ENCODE measurements at regions of chr15 and their contacts with region 1.

Region 1: DNA sequence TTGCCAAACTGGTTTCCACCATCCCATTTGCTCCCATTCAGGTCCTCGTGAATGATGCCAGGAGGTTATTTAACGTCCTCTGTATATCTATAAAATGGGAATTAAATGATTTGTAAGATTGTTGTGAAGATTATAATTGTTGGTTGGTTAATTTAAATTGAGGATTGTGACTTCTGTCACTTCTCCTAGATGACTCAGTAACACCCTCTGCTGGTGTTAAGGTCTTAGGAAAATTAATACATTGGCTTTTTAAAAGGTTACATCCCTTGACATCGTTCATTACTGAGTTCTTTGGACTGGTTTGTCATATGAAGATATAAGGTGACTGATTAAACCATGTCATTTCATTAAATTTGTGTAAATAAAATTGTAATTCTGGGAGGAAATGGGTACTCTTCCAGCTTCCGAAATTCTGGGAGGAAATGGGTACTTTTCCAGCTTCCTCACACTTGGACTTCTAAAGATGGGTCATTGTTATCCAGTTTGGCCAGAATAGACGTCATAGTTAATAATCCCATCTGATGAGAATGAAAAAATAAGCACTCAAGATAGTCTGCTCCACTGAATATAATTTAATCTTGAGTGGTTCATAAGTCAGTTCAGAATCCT is 33.3 kb upstream of the PAQR5 start:
- DNase-seq: peak; percentile 46
- H3K4me3 ChIP-seq: no peak overlapping the region
- H3K27ac ChIP-seq: no peak overlapping the region
- H3K4me1 ChIP-seq: no peaks in the 10 kb centered on the region
- H3K27me3 ChIP-seq: no peaks in the 10 kb centered on the region
- CTCF ChIP-seq: peak; percentile 22 to 33
- POLR2A ChIP-seq: no peak

Region 2: GRCh38 chr15:69031013-69032001 is 234.1 kb before region 1 on chr15:
- CTCF ChIA-PET with region 1: interaction called, 10 read pairs
- POLR2A ChIA-PET with region 1: no interaction called
- dilution Hi-C with region 1: no loop called
- intact Hi-C with region 1: no loop called
- DNase-seq: peak; percentile 35
- H3K4me3 ChIP-seq: peak overlapping the region in 2 of 3 experiments; percentile 9 to 24
- H3K27ac ChIP-seq: no peak overlapping the region
- H3K4me1 ChIP-seq: no peaks in the 10 kb centered on the region
- H3K27me3 ChIP-seq: peaks cover 0 to 2% of the 10 kb centered on the region in 2 experiments
- CTCF ChIP-seq: peak; percentile 56 to 70
- POLR2A ChIP-seq: no peak

Region 3: DNA sequence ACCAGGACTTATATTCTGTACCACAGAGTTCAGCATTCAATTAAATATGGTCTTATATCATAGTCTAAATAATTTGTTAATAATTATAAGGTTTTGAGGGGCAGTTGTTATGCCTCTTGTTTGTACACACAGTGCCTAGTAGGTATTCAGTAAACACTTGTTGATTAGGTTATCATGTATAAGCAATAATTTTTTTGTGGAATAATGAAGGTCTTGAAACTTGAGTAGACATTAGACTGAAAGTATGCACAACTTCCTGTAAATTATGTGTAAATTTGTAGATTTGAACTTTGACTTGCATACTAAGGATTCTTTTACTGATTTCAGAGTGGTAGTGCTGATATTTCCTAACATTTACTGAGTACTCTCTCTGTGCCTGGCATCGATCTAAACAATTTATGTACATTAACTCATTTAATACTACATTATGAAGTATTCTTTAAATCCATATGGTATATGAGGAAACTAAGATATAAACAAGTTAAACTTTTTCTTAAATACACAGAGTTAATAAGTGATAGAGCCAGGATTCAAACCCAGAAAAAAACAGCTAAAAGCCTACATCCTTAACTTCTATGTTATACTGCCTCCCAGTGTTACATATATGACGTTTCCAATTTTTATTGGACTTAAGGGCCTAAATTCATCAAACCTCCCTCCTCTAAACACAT is 40.0 kb before region 1 on chr15:
- CTCF ChIA-PET with region 1: interaction called, 10 read pairs
- POLR2A ChIA-PET with region 1: no interaction called
- dilution Hi-C with region 1: no loop called
- intact Hi-C with region 1: no loop called
- DNase-seq: peak; percentile 62
- H3K4me3 ChIP-seq: no peak overlapping the region
- H3K27ac ChIP-seq: no peak overlapping the region
- H3K4me1 ChIP-seq: peaks cover 2% of the 10 kb centered on the region
- H3K27me3 ChIP-seq: no peaks in the 10 kb centered on the region
- CTCF ChIP-seq: peak; percentile 5 to 18
- POLR2A ChIP-seq: no peak

Measured in endothelial cell of umbilical vein (primary cell).